A549 (cell line): ENCODE measurements at regions of chr1 and their contacts with region 1.

Region 1: DNA sequence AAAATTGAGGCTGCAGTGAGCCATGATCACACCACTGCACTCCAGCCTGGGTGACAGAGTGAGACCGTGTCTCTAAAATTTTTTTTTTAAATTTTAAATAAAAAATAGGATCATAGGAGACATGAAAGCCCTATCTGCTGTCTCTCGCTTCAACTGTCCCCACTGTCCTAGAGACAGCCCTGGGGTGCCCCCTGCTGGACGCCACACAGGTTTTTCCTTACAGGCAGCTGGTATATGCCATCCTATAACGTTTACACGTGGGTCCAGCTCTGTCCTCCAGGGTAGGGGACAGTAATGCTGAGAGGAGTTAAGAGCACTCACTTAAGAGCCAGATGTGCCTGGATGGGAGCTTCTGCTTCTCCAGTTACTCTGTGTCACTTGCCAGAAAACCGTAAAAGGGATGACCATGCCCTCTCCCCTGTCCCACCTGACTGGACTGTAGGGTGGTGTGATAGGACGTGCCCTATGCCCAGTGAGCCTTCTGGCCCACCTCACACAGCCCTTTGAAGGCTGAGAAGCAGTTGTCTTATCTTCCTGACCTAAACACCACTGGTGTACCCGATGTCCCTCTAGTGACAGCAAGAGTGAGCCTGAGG is 8.5 kb downstream of the FBXO2 start:
- DNase-seq: peak; percentile 58 to 74
- ATAC-seq: peak; percentile 64 to 79; a peak in 5 of 6 replicates
- H3K4me3 ChIP-seq: no peak overlapping the region
- H3K27ac ChIP-seq: no peak overlapping the region
- H3K4me1 ChIP-seq: peaks cover 5% of the 10 kb centered on the region
- CTCF ChIP-seq: peak; percentile 73
- EP300 ChIP-seq: no peak
- POLR2A ChIP-seq: no peak
- RAD21 ChIP-seq: peak; percentile 64 to 72

Region 2: GRCh38 chr1:11237356-11237755 is 408.4 kb before region 1 on chr1:
- CTCF ChIA-PET with region 1: interaction called, 50 read pairs
- POLR2A ChIA-PET with region 1: no interaction called
- DNase-seq: no peak
- ATAC-seq: no peak
- H3K4me3 ChIP-seq: no peak overlapping the region
- H3K27ac ChIP-seq: no peak overlapping the region
- H3K4me1 ChIP-seq: no peaks in the 10 kb centered on the region
- CTCF ChIP-seq: no peak
- EP300 ChIP-seq: no peak
- POLR2A ChIP-seq: no peak
- RAD21 ChIP-seq: no peak

Region 3: GRCh38 chr1:11285883-11286734 is 359.7 kb before region 1 on chr1:
- CTCF ChIA-PET with region 1: interaction called, 15 read pairs
- POLR2A ChIA-PET with region 1: no interaction called
- DNase-seq: peak in 1 of 2 experiments; percentile 12
- ATAC-seq: peak; percentile 64 to 68; a peak in 4 of 6 replicates
- H3K4me3 ChIP-seq: no peak overlapping the region
- H3K27ac ChIP-seq: no peak overlapping the region
- H3K4me1 ChIP-seq: no peaks in the 10 kb centered on the region; the same call in 2 of the 3 replicates
- CTCF ChIP-seq: peak; percentile 34
- EP300 ChIP-seq: no peak
- POLR2A ChIP-seq: no peak
- RAD21 ChIP-seq: peak; percentile 17 to 37; a peak in 2 of 5 replicates

Region 4: GRCh38 chr1:11478571-11479374 is 167.0 kb before region 1 on chr1 and contains the start of gene DISP3:
- CTCF ChIA-PET with region 1: interaction called, 20 read pairs
- POLR2A ChIA-PET with region 1: no interaction called
- DNase-seq: peak; percentile 65 to 72
- ATAC-seq: peak; percentile 80 to 88
- H3K4me3 ChIP-seq: peak within 1 kb of the TSS; percentile 74
- H3K27ac ChIP-seq: peak within 1 kb of the TSS; percentile 75 to 93
- H3K4me1 ChIP-seq: peaks cover 4% of the 10 kb centered on the region; the same call in 1 of the 3 replicates
- CTCF ChIP-seq: peak; percentile 62
- EP300 ChIP-seq: no peak
- POLR2A ChIP-seq: peak; percentile 68
- RAD21 ChIP-seq: peak; percentile 2 to 38; a peak in 4 of 5 replicates
- polyA plus RNA-seq, gene DISP3: 0.09 and 0.15 TPM in 2 replicates

Region 5: GRCh38 chr1:11658308-11658941 is 12.7 kb after region 1 on chr1:
- CTCF ChIA-PET with region 1: interaction called, 17 read pairs
- POLR2A ChIA-PET with region 1: no interaction called
- DNase-seq: no peak
- ATAC-seq: no peak
- H3K4me3 ChIP-seq: no peak overlapping the region
- H3K27ac ChIP-seq: no peak overlapping the region
- H3K4me1 ChIP-seq: peaks cover 14% of the 10 kb centered on the region; the same call in 2 of the 3 replicates
- CTCF ChIP-seq: no peak
- EP300 ChIP-seq: no peak
- POLR2A ChIP-seq: no peak
- RAD21 ChIP-seq: no peak

Region 6: GRCh38 chr1:11719313-11720032 is 73.7 kb after region 1 on chr1:
- CTCF ChIA-PET with region 1: interaction called, 107 read pairs
- POLR2A ChIA-PET with region 1: no interaction called
- DNase-seq: peak in 1 of 2 experiments; percentile 53
- ATAC-seq: peak; percentile 78 to 80
- H3K4me3 ChIP-seq: peak overlapping the region; percentile 32
- H3K27ac ChIP-seq: peak overlapping the region; percentile 52 to 79; a peak in 5 of 6 replicates
- H3K4me1 ChIP-seq: no peaks in the 10 kb centered on the region
- CTCF ChIP-seq: peak; percentile 77
- EP300 ChIP-seq: no peak
- POLR2A ChIP-seq: no peak
- RAD21 ChIP-seq: peak; percentile 84 to 86

Region 7: DNA sequence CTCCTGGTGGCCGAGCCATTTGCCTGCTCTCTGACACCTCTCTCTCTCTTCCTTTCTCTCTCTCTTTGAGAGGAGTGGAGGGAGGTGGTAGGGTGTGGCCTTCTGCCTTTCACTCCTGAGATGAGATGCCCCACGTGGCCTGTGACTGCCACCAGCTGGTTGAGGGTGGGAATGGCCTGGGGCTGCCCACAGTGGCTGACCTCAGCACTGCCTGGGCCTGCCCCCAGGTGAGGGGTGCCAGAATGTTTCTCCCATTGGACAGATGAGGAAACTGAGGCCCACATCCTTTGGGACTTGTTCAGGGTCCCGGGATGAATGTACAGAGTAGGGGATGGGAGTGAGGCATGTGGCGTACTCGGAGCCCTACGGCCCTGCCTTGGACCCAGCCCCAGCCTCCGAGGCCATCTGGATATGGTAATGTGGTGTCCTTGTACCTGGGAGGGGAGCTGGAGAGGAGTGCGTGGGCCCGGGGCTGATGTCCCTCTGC is 103.5 kb after region 1 on chr1:
- CTCF ChIA-PET with region 1: interaction called, 13 read pairs
- POLR2A ChIA-PET with region 1: no interaction called
- DNase-seq: peak; percentile 59 to 79
- ATAC-seq: peak; percentile 89 to 96
- H3K4me3 ChIP-seq: no peak overlapping the region
- H3K27ac ChIP-seq: peak overlapping the region in 1 of 2 experiments; percentile 60; a peak in 2 of 6 replicates
- H3K4me1 ChIP-seq: no peaks in the 10 kb centered on the region; the same call in 2 of the 3 replicates
- CTCF ChIP-seq: peak; percentile 44
- EP300 ChIP-seq: no peak
- POLR2A ChIP-seq: no peak
- RAD21 ChIP-seq: peak; percentile 56 to 69; a peak in 4 of 5 replicates